ENCODE measurements at regions of chr12 and their contacts with region 1.

Region 1: GRCh38 chr12:89709995-89710872 is 1.6 kb upstream of the ATP2B1 start:
- DNase-seq: peak; percentile 74
- ATAC-seq: peak; percentile 1
- H3K4me3 Mint-ChIP-seq: peak overlapping the region; percentile 84
- H3K27ac Mint-ChIP-seq: peak overlapping the region; percentile 94
- H3K4me1 Mint-ChIP-seq: peaks cover 14% of the 10 kb centered on the region
- H3K27me3 Mint-ChIP-seq: peaks cover 53% of the 10 kb centered on the region
- CTCF ChIP-seq: no peak

Region 2: DNA sequence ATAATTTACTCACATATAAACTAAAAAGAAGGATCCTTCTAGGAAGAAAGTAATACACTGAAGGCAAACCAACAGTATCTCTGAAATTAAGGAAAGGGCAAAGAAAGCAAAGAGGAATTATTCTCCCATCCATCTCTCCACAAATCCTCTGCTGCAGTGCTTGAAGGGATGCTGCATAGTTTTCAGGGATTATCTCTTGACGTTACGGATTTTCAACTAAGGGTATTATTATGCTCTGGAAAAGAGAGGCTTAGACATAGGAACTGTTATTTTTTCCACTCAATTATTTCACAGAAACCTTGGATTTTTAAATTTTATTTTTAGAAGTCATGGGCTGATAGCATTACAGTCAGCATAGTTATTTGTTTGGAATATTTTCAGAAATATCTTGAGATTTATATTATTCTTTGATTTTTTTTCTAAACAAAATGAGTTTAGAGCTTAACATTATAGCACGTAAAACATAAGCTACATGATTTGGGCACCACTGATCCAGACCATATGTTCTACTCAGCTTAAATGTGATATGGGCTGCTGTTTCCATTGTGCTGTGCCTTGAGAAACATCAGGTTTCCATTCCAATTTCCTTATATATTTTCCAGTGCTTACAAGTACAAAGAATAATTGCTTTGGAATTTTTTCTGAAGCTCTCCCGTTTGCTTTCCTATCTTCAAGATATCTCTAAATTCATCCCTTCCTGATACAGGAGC is 1530.3 kb after region 1 on chr12:
- CTCF ChIA-PET with region 1: no interaction called
- POLR2A ChIA-PET with region 1: interaction called, 13 read pairs
- DNase-seq: no peak
- ATAC-seq: no peak
- H3K4me3 Mint-ChIP-seq: no peak overlapping the region
- H3K27ac Mint-ChIP-seq: no peak overlapping the region
- H3K4me1 Mint-ChIP-seq: peaks cover 4% of the 10 kb centered on the region; the same call in 1 of the 2 replicates
- H3K27me3 Mint-ChIP-seq: no peaks in the 10 kb centered on the region
- CTCF ChIP-seq: no peak